ENCODE measurements at regions of chr10 and their contacts with region 1.

Region 1: GRCh38 chr10:63465293-63466143 is at the start of gene JMJD1C:
- DNase-seq: peak; percentile 75
- H3K4me3 ChIP-seq: peak within 1 kb of the TSS; percentile 80 to 85
- H3K27ac ChIP-seq: peak within 1 kb of the TSS; percentile 96 to 97
- H3K4me1 ChIP-seq: peaks cover 3% of the 10 kb centered on the region
- H3K27me3 ChIP-seq: no peaks in the 10 kb centered on the region
- CTCF ChIP-seq: peak in 2 of 4 experiments; percentile 8 to 22
- POLR2A ChIP-seq: peak; percentile 79
- total RNA-seq, gene JMJD1C: 66.9 to 97.9 TPM

Region 2: DNA sequence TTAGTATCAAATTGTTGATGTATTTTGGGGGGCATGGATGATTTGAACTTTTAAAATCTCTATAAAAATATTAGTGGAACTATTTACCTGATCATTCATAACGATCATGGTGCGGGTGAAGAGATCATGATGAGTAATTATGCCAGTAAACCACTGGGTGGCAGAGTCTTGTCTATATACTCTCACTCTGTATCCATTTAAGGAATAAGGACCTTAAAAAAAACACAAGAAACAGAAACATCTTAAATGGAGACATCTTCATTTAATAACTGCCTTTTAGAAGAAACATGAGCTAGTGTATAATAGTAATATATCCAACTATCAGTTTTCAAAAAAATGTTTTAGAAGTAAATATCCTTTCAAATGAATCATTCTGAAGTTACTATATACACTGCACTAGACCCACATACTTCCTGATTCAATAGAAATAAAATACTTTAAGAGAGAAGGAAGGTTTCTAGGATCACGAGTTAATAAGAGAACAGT is 248.4 kb before region 1 on chr10:
- intact Hi-C with region 1: loop called (anchors 5 kb)
- DNase-seq: peak; percentile 44
- H3K4me3 ChIP-seq: no peak overlapping the region
- H3K27ac ChIP-seq: no peak overlapping the region
- H3K4me1 ChIP-seq: no peaks in the 10 kb centered on the region
- H3K27me3 ChIP-seq: no peaks in the 10 kb centered on the region
- CTCF ChIP-seq: peak in 3 of 4 experiments; percentile 68 to 80 (median 77)
- POLR2A ChIP-seq: no peak

Region 3: GRCh38 chr10:63268798-63269503 is 196.6 kb before region 1 on chr10:
- intact Hi-C with region 1: loop called (anchors 2 kb)
- DNase-seq: peak; percentile 92
- H3K4me3 ChIP-seq: peak overlapping the region; percentile 37 to 39
- H3K27ac ChIP-seq: peak overlapping the region; percentile 90
- H3K4me1 ChIP-seq: no peaks in the 10 kb centered on the region
- H3K27me3 ChIP-seq: no peaks in the 10 kb centered on the region
- CTCF ChIP-seq: peak in 3 of 4 experiments; percentile 17 to 74 (median 64)
- POLR2A ChIP-seq: peak; percentile 99

Region 4: GRCh38 chr10:63521416-63522276 is 56.1 kb after region 1 on chr10:
- intact Hi-C with region 1: loop called (anchors 1 kb)
- DNase-seq: peak; percentile 51
- H3K4me3 ChIP-seq: peak overlapping the region; percentile 73 to 76
- H3K27ac ChIP-seq: peak overlapping the region; percentile 98
- H3K4me1 ChIP-seq: peaks cover 8% of the 10 kb centered on the region
- H3K27me3 ChIP-seq: no peaks in the 10 kb centered on the region
- CTCF ChIP-seq: no peak
- POLR2A ChIP-seq: peak; percentile 14

Region 5: GRCh38 chr10:63711867-63712716 is 246.6 kb after region 1 on chr10:
- intact Hi-C with region 1: loop called (anchors 5 kb)
- DNase-seq: peak; percentile 99
- H3K4me3 ChIP-seq: no peak overlapping the region
- H3K27ac ChIP-seq: peak overlapping the region; percentile 71 to 81
- H3K4me1 ChIP-seq: peaks cover 18% of the 10 kb centered on the region
- H3K27me3 ChIP-seq: no peaks in the 10 kb centered on the region
- CTCF ChIP-seq: no peak
- POLR2A ChIP-seq: no peak